ENCODE measurements at regions of chrX and their contacts with region 1.

Region 1: DNA sequence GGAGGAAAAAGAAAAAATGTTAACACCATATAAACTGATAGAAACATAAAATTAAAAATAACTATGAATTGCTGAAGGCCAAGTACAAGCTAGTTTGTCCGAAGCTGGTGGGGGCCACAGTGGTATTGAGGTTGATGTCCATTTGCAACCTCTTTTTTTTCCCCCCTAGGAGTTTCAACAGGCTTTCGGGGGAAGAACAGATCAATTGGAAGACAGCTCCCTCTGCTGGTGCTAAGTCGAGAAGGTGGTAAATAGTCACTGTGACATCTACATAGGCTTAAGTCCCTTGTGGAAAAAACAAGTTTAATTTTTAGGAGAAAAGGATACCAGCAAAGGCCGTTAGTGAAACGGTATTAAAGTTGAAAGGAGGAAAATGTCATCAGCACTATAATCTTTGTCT is 115.7 kb upstream of the ZXDA start:
- DNase-seq: peak in 1 of 2 donors; percentile 63
- ATAC-seq: peak in 1 of 3 donors; percentile 52
- H3K4me3 ChIP-seq: no peak overlapping the region
- H3K4me3 Mint-ChIP-seq: no peak overlapping the region
- H3K27ac ChIP-seq: no peak overlapping the region
- H3K27ac Mint-ChIP-seq: no peak overlapping the region
- H3K4me1 ChIP-seq: no peaks in the 10 kb centered on the region
- H3K4me1 Mint-ChIP-seq: no peaks in the 10 kb centered on the region
- H3K27me3 ChIP-seq: no peaks in the 10 kb centered on the region
- H3K27me3 Mint-ChIP-seq: peaks cover 0 to 17% of the 10 kb centered on the region in 2 donors
- CTCF ChIP-seq: peak; percentile 17

Region 2: GRCh38 chrX:57367649-57368048 is 658.3 kb before region 1 on chrX:
- intact Hi-C with region 1: no loop called
- DNase-seq: no peak
- ATAC-seq: no peak
- H3K4me3 ChIP-seq: no peak overlapping the region
- H3K4me3 Mint-ChIP-seq: no peak overlapping the region
- H3K27ac ChIP-seq: no peak overlapping the region
- H3K27ac Mint-ChIP-seq: no peak overlapping the region
- H3K4me1 ChIP-seq: no peaks in the 10 kb centered on the region
- H3K4me1 Mint-ChIP-seq: no peaks in the 10 kb centered on the region
- H3K27me3 ChIP-seq: no peaks in the 10 kb centered on the region
- H3K27me3 Mint-ChIP-seq: peaks cover 0 to 12% of the 10 kb centered on the region in 2 donors
- CTCF ChIP-seq: no peak

Region 3: GRCh38 chrX:57821703-57822375 is 204.1 kb before region 1 on chrX:
- intact Hi-C with region 1: loop called (anchors 5 kb)
- DNase-seq: peak in 1 of 2 donors; percentile 77
- ATAC-seq: peak in 1 of 3 donors; percentile 67
- H3K4me3 ChIP-seq: no peak overlapping the region
- H3K4me3 Mint-ChIP-seq: no peak overlapping the region
- H3K27ac ChIP-seq: no peak overlapping the region
- H3K27ac Mint-ChIP-seq: no peak overlapping the region
- H3K4me1 ChIP-seq: no peaks in the 10 kb centered on the region
- H3K4me1 Mint-ChIP-seq: peaks cover 0 to 5% of the 10 kb centered on the region in 2 donors
- H3K27me3 ChIP-seq: no peaks in the 10 kb centered on the region
- H3K27me3 Mint-ChIP-seq: peaks cover 0 to 19% of the 10 kb centered on the region in 2 donors
- CTCF ChIP-seq: peak; percentile 45

Region 4: DNA sequence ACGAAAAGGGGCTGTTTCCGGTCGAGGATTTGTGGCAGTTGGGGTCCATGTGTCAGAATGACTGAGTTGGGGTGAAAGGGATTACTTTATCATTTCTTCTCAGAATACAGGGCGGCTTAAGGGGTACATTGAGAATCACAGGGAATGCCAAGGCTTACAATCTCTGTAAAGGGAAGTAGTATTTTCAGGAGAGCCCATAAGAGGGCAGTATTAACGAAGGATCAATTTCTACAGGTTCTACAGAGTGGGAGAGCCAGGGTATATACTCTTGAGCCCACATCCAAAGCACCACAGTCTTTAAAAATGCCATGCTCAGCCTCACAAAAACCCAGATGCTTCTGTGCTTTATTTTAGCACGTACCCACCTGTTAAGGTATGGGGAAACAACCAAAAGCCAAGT is 48.0 kb before region 1 on chrX:
- intact Hi-C with region 1: no loop called
- DNase-seq: no peak
- ATAC-seq: no peak
- H3K4me3 ChIP-seq: no peak overlapping the region
- H3K4me3 Mint-ChIP-seq: no peak overlapping the region
- H3K27ac ChIP-seq: no peak overlapping the region
- H3K27ac Mint-ChIP-seq: no peak overlapping the region
- H3K4me1 ChIP-seq: no peaks in the 10 kb centered on the region
- H3K4me1 Mint-ChIP-seq: no peaks in the 10 kb centered on the region
- H3K27me3 ChIP-seq: no peaks in the 10 kb centered on the region
- H3K27me3 Mint-ChIP-seq: peaks cover 0 to 19% of the 10 kb centered on the region in 2 donors
- CTCF ChIP-seq: no peak

Region 5: GRCh38 chrX:58044144-58044543 is 18.2 kb after region 1 on chrX:
- intact Hi-C with region 1: no loop called
- DNase-seq: no peak
- ATAC-seq: no peak
- H3K4me3 ChIP-seq: no peak overlapping the region
- H3K4me3 Mint-ChIP-seq: no peak overlapping the region
- H3K27ac ChIP-seq: no peak overlapping the region
- H3K27ac Mint-ChIP-seq: no peak overlapping the region
- H3K4me1 ChIP-seq: no peaks in the 10 kb centered on the region
- H3K4me1 Mint-ChIP-seq: no peaks in the 10 kb centered on the region
- H3K27me3 ChIP-seq: no peaks in the 10 kb centered on the region
- H3K27me3 Mint-ChIP-seq: no peaks in the 10 kb centered on the region
- CTCF ChIP-seq: no peak